Sciatic nerve (tissue), 2 donors: ENCODE measurements at regions of chr6 and their contacts with region 1.

Region 1: GRCh38 chr6:43506667-43507471 is 3.3 kb downstream of the LRRC73 start:
- DNase-seq: peak; percentile 89
- ATAC-seq: peak; percentile 74

Region 2: GRCh38 chr6:43386492-43386891 is 120.4 kb before region 1 on chr6:
- intact Hi-C with region 1: loop called (anchors 2 kb)
- DNase-seq: no peak
- ATAC-seq: no peak

Region 3: GRCh38 chr6:43454696-43455530 is 52.0 kb before region 1 on chr6:
- intact Hi-C with region 1: loop called (anchors 5 kb)
- DNase-seq: peak; percentile 91
- ATAC-seq: peak; percentile 92